Right ventricle myocardium inferior (tissue), 1 donor: ENCODE measurements at regions of chr9 and their contacts with region 1.

Region 1: GRCh38 chr9:85741875-85742629 is at the start of gene AGTPBP1:
- DNase-seq: peak; percentile 99
- ATAC-seq: peak; percentile 98
- total RNA-seq, gene AGTPBP1: 68.0 TPM

Region 2: DNA sequence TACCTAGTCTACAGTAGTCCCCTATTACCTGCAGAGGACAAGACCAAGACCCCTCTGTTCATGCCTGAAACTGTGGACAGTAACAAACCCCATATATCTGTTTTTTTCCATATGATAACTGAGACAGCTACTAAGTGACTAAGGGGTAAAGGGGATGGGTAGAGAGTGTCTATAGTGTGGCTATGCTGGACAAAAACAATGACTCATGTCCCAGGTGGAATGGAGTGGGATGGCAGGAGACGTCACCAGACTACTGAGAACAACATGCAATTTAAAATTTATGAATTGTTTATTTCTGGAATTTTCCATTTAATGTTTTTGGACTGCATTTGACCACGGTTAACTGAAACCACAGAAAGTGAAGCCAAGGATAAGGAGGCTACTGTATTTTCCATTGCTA is 172.1 kb before region 1 on chr9:
- intact Hi-C with region 1: no loop called
- DNase-seq: no peak
- ATAC-seq: no peak

Region 3: GRCh38 chr9:85676790-85677189 is 65.3 kb before region 1 on chr9:
- intact Hi-C with region 1: no loop called
- DNase-seq: no peak
- ATAC-seq: no peak

Region 4: GRCh38 chr9:85940832-85941621 is 199.0 kb after region 1 on chr9 and contains the start of gene NAA35:
- intact Hi-C with region 1: loop called (anchors 10 kb)
- DNase-seq: peak; percentile 97
- ATAC-seq: peak; percentile 98
- total RNA-seq, gene NAA35: 16.4 TPM

Region 5: DNA sequence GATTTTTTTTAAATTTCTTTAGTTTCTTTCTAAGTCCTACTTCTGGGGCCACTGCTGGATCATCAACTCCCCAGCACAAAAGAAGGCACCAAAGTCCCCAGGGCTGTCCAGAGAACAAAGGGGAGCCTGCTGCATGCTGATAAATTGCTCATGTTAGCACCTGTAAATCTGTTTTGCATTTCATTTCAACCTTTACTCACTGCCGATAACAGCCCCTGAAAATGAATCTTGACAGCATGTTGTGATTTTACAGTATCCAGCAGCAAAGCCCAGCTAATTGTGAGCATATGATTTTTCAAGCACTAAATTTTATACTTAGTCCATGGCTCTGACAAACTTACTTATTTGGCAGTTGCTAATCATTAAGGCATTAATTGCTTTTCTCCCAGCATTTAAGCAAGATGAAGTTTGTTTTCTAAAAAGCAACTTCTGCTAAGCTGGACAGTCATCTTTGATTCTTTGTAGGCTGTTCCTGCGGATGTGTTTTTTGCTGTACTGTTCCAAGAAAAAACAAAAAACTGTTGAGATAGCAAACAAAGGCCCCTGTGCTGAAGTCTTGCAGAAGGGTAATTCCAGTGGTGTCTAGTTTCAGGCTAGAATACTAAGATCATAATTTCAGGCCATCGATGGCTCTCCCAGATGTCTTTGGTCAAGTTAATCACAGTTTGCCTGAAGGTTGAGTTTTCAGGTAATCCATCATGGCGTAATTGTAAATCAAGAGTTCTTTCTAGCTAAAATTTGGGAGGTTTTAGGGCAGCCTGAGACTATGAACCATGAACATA is 1278.3 kb after region 1 on chr9:
- intact Hi-C with region 1: no loop called
- DNase-seq: no peak
- ATAC-seq: no peak